Sciatic nerve (tissue), 2 donors: ENCODE measurements at regions of chr13 and their contacts with region 1.

Region 1: DNA sequence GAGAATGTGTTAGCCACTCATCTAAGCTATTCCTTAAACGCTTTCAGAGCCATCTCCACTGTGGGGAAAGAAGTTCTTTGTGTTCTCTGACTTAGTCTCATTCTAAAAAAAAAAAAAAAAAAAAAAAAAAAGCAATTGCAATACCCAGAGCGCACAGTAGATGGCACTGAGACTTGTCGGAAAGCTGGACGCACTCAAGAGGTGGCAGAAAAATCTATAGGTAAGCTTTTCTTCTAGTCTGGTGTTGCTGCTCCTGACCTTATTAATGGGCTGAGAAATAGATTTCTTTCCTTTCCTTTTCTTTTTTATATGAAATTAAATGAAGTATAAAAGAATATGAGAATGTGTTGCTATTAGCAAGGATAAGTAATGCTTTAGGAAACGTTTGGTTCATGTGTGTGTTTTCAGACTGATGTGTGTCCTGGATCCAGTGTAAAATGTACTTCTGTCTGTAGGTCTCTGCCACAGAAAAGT is 4.7 kb upstream of the GJB2 start:
- DNase-seq: no peak
- ATAC-seq: peak; percentile 65

Region 2: GRCh38 chr13:20489185-20489820 is 291.9 kb after region 1 on chr13:
- intact Hi-C with region 1: loop called (anchors 10 kb)
- DNase-seq: no peak
- ATAC-seq: no peak

Region 3: GRCh38 chr13:20512042-20512683 is 314.8 kb after region 1 on chr13:
- intact Hi-C with region 1: no loop called
- DNase-seq: no peak
- ATAC-seq: no peak